ENCODE measurements at regions of chrX and their contacts with region 1.

Region 1: DNA sequence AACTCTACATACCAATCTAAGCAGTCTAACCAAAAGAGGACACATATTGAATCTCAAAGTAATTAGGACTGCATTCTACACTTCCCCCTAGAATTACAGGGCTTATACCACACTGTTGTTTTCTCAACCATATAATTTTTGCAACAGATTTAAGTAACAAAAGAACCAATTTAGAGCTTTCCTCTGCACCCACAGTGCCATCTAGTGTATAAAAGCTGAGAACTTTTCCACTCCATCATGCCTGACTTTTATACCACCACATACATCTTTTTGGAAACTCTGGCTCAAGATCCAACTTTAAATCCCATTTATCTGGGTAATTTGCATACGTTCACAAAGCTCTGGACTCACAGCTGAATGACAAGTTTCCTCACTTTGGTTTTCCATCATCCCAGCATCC is 99.5 kb downstream of the EFHC2 start:
- DNase-seq: peak in 4 of 5 donors; percentile 36 to 44 (median 40)
- H3K4me3 ChIP-seq: no peak overlapping the region
- H3K4me3 Mint-ChIP-seq: peak overlapping the region in 1 of 8 donors; percentile 36
- H3K27ac ChIP-seq: no peak overlapping the region
- H3K27ac Mint-ChIP-seq: peak overlapping the region in 4 of 7 donors; percentile 14 to 57 (median 38)
- H3K4me1 ChIP-seq: peaks cover 14% of the 10 kb centered on the region
- H3K4me1 Mint-ChIP-seq: peaks cover 17 to 47% (median 27%) of the 10 kb centered on the region in 4 donors
- H3K27me3 ChIP-seq: no peaks in the 10 kb centered on the region
- H3K27me3 Mint-ChIP-seq: no peaks in the 10 kb centered on the region

Region 2: GRCh38 chrX:43836435-43837184 is 407.4 kb before region 1 on chrX:
- CTCF ChIA-PET with region 1: interaction called, 15 read pairs
- POLR2A ChIA-PET with region 1: no interaction called
- intact Hi-C with region 1: loop called (anchors 1 kb)
- DNase-seq: peak in 4 of 5 donors; percentile 17 to 33 (median 29)
- H3K4me3 ChIP-seq: no peak overlapping the region
- H3K4me3 Mint-ChIP-seq: no peak overlapping the region
- H3K27ac ChIP-seq: no peak overlapping the region
- H3K27ac Mint-ChIP-seq: no peak overlapping the region
- H3K4me1 ChIP-seq: no peaks in the 10 kb centered on the region
- H3K4me1 Mint-ChIP-seq: no peaks in the 10 kb centered on the region
- H3K27me3 ChIP-seq: no peaks in the 10 kb centered on the region
- H3K27me3 Mint-ChIP-seq: peaks cover 0 to 3% of the 10 kb centered on the region in 2 donors

Region 3: GRCh38 chrX:44228621-44229020 is 15.4 kb before region 1 on chrX:
- CTCF ChIA-PET with region 1: no interaction called
- POLR2A ChIA-PET with region 1: no interaction called
- intact Hi-C with region 1: no loop called
- DNase-seq: no peak
- H3K4me3 ChIP-seq: no peak overlapping the region
- H3K4me3 Mint-ChIP-seq: no peak overlapping the region
- H3K27ac ChIP-seq: no peak overlapping the region
- H3K27ac Mint-ChIP-seq: no peak overlapping the region
- H3K4me1 ChIP-seq: no peaks in the 10 kb centered on the region
- H3K4me1 Mint-ChIP-seq: peaks cover 0 to 6% (median under 1%) of the 10 kb centered on the region in 4 donors
- H3K27me3 ChIP-seq: no peaks in the 10 kb centered on the region
- H3K27me3 Mint-ChIP-seq: no peaks in the 10 kb centered on the region

Region 4: DNA sequence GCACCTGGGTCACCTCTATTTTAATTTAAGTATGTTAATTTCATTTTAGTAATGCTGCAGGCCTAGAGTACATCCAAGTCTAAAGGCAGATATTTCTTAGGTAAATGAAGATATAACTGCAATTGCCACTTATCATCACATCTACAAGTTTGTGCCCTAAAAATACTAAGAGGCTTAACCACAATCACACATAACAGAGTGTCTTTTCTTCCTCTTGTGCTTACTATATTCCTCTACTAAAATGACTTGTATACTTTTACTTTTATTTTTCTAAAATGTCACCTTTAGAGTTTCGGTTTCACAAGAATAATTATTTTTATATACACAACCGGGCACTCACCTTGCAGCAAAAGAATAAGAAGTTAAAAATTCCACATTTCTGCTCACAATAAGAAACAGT is 21.6 kb after region 1 on chrX:
- CTCF ChIA-PET with region 1: interaction called, 13 read pairs
- POLR2A ChIA-PET with region 1: interaction called, 5 read pairs
- intact Hi-C with region 1: no loop called
- DNase-seq: peak in 2 of 5 donors; percentile 22 to 40
- H3K4me3 ChIP-seq: no peak overlapping the region
- H3K4me3 Mint-ChIP-seq: peak overlapping the region; percentile 7 to 82 (median 54)
- H3K27ac ChIP-seq: no peak overlapping the region
- H3K27ac Mint-ChIP-seq: peak overlapping the region; percentile 0 to 80 (median 57)
- H3K4me1 ChIP-seq: peaks cover 35% of the 10 kb centered on the region
- H3K4me1 Mint-ChIP-seq: peaks cover 18 to 47% (median 35%) of the 10 kb centered on the region in 4 donors
- H3K27me3 ChIP-seq: no peaks in the 10 kb centered on the region
- H3K27me3 Mint-ChIP-seq: no peaks in the 10 kb centered on the region

Region 5: GRCh38 chrX:44343412-44344141 is 99.6 kb after region 1 on chrX and contains the start of gene EFHC2:
- CTCF ChIA-PET with region 1: interaction called, 3 read pairs
- POLR2A ChIA-PET with region 1: interaction called, 5 read pairs
- intact Hi-C with region 1: loop called (anchors 2 kb)
- DNase-seq: peak; percentile 62 to 73 (median 68)
- H3K4me3 ChIP-seq: peak within 1 kb of the TSS; percentile 55 to 57
- H3K4me3 Mint-ChIP-seq: peak within 1 kb of the TSS; percentile 85 to 96 (median 92)
- H3K27ac ChIP-seq: peak within 1 kb of the TSS; percentile 81
- H3K27ac Mint-ChIP-seq: peak within 1 kb of the TSS; percentile 94 to 97 (median 96)
- H3K4me1 ChIP-seq: peaks cover 14% of the 10 kb centered on the region
- H3K4me1 Mint-ChIP-seq: peaks cover 7 to 33% (median 23%) of the 10 kb centered on the region in 4 donors
- H3K27me3 ChIP-seq: no peaks in the 10 kb centered on the region
- H3K27me3 Mint-ChIP-seq: no peaks in the 10 kb centered on the region
- total RNA-seq, gene EFHC2: 0.94 to 1.9 TPM

Region 6: GRCh38 chrX:44802613-44803012 is 558.6 kb after region 1 on chrX:
- CTCF ChIA-PET with region 1: no interaction called
- POLR2A ChIA-PET with region 1: no interaction called
- intact Hi-C with region 1: no loop called
- DNase-seq: no peak
- H3K4me3 ChIP-seq: no peak overlapping the region
- H3K4me3 Mint-ChIP-seq: no peak overlapping the region
- H3K27ac ChIP-seq: no peak overlapping the region
- H3K27ac Mint-ChIP-seq: no peak overlapping the region
- H3K4me1 ChIP-seq: no peaks in the 10 kb centered on the region
- H3K4me1 Mint-ChIP-seq: no peaks in the 10 kb centered on the region
- H3K27me3 ChIP-seq: no peaks in the 10 kb centered on the region
- H3K27me3 Mint-ChIP-seq: no peaks in the 10 kb centered on the region

Region 7: DNA sequence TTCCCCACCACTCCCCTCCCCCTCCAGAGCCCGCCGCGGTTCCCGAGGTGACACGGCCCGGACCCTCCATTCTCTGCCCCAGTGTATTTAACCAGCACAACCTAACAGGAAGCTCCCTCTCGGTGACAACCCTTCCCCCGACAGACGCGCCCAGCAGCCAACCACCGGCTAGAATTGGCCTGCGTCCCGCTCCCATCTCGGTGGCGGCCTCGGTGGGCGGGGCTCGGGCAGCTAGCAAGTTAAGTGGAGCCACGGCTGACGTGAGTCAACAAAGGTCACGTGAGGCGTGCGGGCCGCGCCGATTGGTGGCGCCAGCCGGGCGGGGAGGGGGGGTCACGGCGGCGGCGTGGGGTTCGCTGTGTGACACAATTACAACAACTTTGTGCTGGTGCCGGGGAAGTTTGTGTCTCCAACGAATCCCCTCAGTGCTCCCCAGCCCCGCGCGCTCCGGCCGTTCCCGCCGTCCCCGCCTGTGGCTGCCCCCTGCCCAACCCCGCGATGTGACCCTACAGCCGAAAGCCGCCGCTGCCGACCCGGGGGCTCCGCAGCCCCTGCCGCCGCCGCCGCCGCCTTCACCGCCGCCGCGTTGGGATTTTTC is 628.9 kb after region 1 on chrX and contains the start of gene KDM6A:
- CTCF ChIA-PET with region 1: no interaction called
- POLR2A ChIA-PET with region 1: no interaction called
- intact Hi-C with region 1: loop called (anchors 10 kb)
- DNase-seq: peak; percentile 97 to 99 (median 99)
- H3K4me3 ChIP-seq: peak within 1 kb of the TSS; percentile 62 to 73
- H3K4me3 Mint-ChIP-seq: peak within 1 kb of the TSS; percentile 93 to 100 (median 99)
- H3K27ac ChIP-seq: peak within 1 kb of the TSS; percentile 85
- H3K27ac Mint-ChIP-seq: peak within 1 kb of the TSS; percentile 97 to 100 (median 99)
- H3K4me1 ChIP-seq: peaks cover 30% of the 10 kb centered on the region
- H3K4me1 Mint-ChIP-seq: peaks cover 9 to 38% (median 28%) of the 10 kb centered on the region in 4 donors
- H3K27me3 ChIP-seq: no peaks in the 10 kb centered on the region
- H3K27me3 Mint-ChIP-seq: no peaks in the 10 kb centered on the region
- total RNA-seq, gene KDM6A: 44.9 to 51.2 TPM

Measured in CD4-positive, alpha-beta memory T cell (primary cell).